T-cell (primary cell): ENCODE measurements at regions of chr13 and their contacts with region 1.

Region 1: DNA sequence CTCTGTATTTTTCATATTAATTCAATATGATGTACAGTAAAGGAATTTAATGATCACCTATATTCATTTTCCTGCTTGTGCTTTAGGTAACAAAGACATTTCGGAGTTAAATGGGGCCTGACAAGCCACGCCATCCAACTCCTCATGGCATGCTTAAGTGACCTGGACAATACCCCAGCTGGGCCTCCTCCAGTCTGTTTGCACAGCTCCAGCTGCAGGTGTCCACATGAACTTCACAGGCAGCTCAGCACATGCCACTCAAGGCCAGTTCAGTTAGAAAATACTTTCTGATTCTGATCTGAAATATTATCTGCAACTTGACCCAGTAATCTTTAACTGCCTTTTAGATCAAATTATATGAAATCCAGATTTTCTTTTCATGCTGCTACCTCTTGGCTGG is 89.6 kb upstream of the SLC15A1 start:
- DNase-seq: no peak
- ATAC-seq: no peak
- H3K4me3 ChIP-seq: no peak overlapping the region
- H3K4me3 Mint-ChIP-seq: no peak overlapping the region
- H3K27ac ChIP-seq: no peak overlapping the region
- H3K27ac Mint-ChIP-seq: no peak overlapping the region
- H3K4me1 ChIP-seq: no peaks in the 10 kb centered on the region
- H3K4me1 Mint-ChIP-seq: peaks cover 0 to 9% (median 7%) of the 10 kb centered on the region in 3 donors
- H3K27me3 ChIP-seq: no peaks in the 10 kb centered on the region
- H3K27me3 Mint-ChIP-seq: no peaks in the 10 kb centered on the region

Region 2: DNA sequence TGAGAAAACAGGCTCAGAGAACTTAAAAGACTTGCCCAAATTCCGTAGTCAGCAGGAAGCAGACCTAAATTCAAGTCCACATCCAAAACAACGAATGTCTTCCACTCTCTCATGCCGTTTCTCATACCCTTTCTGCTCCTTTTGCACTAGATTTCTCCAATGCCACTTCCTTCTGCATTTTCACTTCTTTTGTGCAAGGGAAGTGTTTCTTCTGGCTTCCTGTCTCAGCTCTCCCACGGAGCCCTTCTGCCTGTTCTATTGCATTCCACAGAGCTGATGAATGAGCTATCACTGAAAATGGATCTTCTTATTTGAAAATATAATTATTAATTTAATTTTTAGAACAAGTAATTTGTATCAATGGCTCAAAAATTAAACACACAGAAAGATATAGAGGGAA is 209.1 kb before region 1 on chr13:
- CTCF ChIA-PET with region 1: no interaction called
- POLR2A ChIA-PET with region 1: no interaction called
- DNase-seq: no peak
- ATAC-seq: no peak
- H3K4me3 ChIP-seq: no peak overlapping the region
- H3K4me3 Mint-ChIP-seq: no peak overlapping the region
- H3K27ac ChIP-seq: no peak overlapping the region
- H3K27ac Mint-ChIP-seq: no peak overlapping the region
- H3K4me1 ChIP-seq: no peaks in the 10 kb centered on the region
- H3K4me1 Mint-ChIP-seq: peaks cover 0 to 2% (median 0%) of the 10 kb centered on the region in 3 donors
- H3K27me3 ChIP-seq: peaks cover 0 to 10% of the 10 kb centered on the region in 2 experiments
- H3K27me3 Mint-ChIP-seq: peaks cover 0 to 6% of the 10 kb centered on the region in 2 donors

Region 3: DNA sequence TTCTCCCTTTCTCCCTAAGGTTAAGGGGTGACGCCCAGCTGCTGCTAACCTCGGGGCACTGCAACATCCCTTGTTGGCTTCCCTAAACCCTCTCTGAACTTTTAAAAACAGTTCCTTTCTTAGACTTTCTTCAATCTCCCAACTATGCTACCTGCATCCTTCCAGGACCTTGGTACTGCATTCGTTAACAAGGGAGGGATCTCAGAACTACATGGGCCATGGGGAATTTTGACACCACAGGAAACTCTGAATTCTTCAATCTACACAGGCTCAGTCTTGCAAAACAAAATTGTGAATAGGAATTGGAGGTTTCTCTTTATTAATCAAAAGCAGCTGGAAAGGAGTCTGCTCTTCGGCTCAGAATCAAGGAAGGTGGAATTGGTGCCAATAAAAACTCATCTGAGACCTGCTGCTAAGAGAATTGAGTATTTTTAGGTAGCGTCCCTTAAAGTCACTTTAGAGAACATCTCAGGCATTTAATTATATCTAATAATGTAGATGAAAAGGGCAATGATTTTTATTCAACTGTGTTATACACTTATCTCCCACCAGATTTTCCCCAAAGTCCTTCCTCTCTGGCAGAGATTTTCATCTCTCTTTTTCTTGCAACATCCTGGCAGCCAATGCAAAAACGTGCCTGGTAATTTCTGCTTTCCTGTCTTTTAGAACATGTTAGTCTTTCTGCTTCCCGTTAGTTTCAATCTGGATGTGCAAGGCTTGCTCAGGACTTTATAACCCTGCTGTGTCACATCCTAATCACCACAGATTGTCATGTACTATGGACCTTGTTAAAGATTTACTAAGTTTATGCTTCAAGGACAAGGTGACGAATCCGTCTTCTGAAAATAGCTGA is 20.5 kb before region 1 on chr13:
- CTCF ChIA-PET with region 1: interaction called, 4 to 11 read pairs
- POLR2A ChIA-PET with region 1: no interaction called
- DNase-seq: no peak
- ATAC-seq: no peak
- H3K4me3 ChIP-seq: no peak overlapping the region
- H3K4me3 Mint-ChIP-seq: no peak overlapping the region
- H3K27ac ChIP-seq: no peak overlapping the region
- H3K27ac Mint-ChIP-seq: no peak overlapping the region
- H3K4me1 ChIP-seq: peaks cover 0 to 3% of the 10 kb centered on the region in 2 experiments
- H3K4me1 Mint-ChIP-seq: peaks cover 7 to 20% (median 9%) of the 10 kb centered on the region in 3 donors
- H3K27me3 ChIP-seq: no peaks in the 10 kb centered on the region
- H3K27me3 Mint-ChIP-seq: no peaks in the 10 kb centered on the region